ENCODE measurements at regions of chr12 and their contacts with region 1.

Region 1: DNA sequence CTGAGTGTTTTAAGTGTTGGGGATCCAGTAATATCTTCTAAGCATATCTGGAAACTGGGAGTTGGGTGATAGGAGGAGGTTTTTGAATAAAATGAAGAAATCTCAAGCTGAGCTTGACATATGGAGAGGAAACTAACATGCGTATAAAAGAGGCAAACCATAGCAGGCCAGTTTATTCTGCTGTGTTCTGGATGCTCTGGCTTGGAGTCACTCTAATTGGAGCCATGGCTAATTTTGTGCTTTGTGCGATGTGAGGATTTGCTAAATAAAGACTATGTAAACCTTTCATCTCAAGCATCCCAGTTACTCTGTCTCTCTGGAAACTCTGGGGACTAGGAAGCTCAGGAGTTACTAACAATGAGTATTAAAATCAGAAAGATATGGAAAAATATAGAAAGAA is 66.5 kb downstream of the ATF7IP start:
- DNase-seq: no peak
- ATAC-seq: no peak
- H3K4me3 ChIP-seq: no peak overlapping the region
- H3K4me3 Mint-ChIP-seq: peak overlapping the region in 2 of 3 donors; percentile 13 to 41
- H3K27ac ChIP-seq: no peak overlapping the region
- H3K27ac Mint-ChIP-seq: peak overlapping the region in 1 of 2 donors; percentile 28
- H3K4me1 ChIP-seq: peaks cover 0 to 16% of the 10 kb centered on the region in 2 experiments
- H3K4me1 Mint-ChIP-seq: peaks cover 64 to 80% (median 66%) of the 10 kb centered on the region in 3 donors
- H3K27me3 ChIP-seq: no peaks in the 10 kb centered on the region
- H3K27me3 Mint-ChIP-seq: no peaks in the 10 kb centered on the region

Region 2: DNA sequence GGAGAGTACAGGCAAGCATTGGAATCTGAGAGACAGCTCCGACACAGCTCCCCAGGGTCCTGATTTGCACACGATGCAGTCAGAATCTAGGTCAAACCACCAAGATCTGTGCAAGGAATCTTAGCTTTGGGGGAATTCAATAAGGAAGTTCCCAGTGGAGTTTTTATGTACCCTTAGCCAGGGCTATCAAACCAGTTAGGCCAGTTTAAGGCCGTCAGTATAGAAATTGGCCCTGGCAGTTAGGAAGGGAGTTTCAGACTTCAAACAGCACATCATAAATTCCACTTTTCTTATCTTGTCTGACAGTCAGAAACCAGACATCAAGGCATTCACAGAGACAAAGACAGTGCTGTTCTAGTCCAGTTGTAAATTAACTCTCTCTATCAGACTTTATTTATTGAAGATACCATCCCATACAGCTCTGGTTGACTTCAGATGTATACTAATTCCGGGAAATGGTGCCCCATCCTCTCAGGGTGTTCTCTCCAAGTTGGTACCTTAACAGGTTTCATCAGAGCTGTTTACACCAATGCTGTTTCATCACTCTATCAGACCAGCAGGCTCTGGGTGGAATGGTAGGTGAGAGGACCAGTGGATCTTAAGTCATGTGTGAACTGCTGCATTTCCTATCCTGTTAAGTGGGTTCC is 223.9 kb before region 1 on chr12:
- CTCF ChIA-PET with region 1: no interaction called
- POLR2A ChIA-PET with region 1: interaction called in 1 of 2 experiments, 16 read pairs
- DNase-seq: no peak
- ATAC-seq: no peak
- H3K4me3 ChIP-seq: no peak overlapping the region
- H3K4me3 Mint-ChIP-seq: no peak overlapping the region
- H3K27ac ChIP-seq: no peak overlapping the region
- H3K27ac Mint-ChIP-seq: no peak overlapping the region
- H3K4me1 ChIP-seq: no peaks in the 10 kb centered on the region
- H3K4me1 Mint-ChIP-seq: no peaks in the 10 kb centered on the region
- H3K27me3 ChIP-seq: no peaks in the 10 kb centered on the region
- H3K27me3 Mint-ChIP-seq: no peaks in the 10 kb centered on the region

Region 3: DNA sequence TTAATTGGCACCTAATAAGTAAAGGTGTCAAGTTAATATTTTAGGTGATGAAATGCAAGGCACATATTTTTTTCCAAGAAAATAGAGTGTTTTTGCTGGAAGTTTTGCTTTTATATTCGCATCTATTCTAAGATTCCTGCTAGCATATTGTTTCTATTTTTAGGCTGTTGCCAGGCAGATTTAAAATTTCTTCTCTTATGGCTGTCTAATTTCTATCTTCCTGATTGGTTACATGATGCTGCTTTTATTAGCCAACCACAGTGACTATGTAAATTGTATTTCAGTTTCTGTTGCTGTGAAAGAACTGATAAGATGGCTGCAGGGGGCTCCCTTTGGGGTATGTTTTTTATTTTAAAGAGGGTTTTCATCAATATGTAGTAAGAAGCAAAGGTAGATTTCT is 23.8 kb before region 1 on chr12:
- CTCF ChIA-PET with region 1: no interaction called
- POLR2A ChIA-PET with region 1: no interaction called
- DNase-seq: peak in 1 of 35 experiments; percentile 58
- ATAC-seq: peak in 1 of 4 experiments; percentile 50
- H3K4me3 ChIP-seq: no peak overlapping the region
- H3K4me3 Mint-ChIP-seq: peak overlapping the region; percentile 7 to 24 (median 10)
- H3K27ac ChIP-seq: peak overlapping the region; percentile 44
- H3K27ac Mint-ChIP-seq: peak overlapping the region; percentile 68 to 71
- H3K4me1 ChIP-seq: peaks cover 9 to 29% of the 10 kb centered on the region in 2 experiments
- H3K4me1 Mint-ChIP-seq: peaks cover 58 to 77% (median 76%) of the 10 kb centered on the region in 3 donors
- H3K27me3 ChIP-seq: no peaks in the 10 kb centered on the region
- H3K27me3 Mint-ChIP-seq: no peaks in the 10 kb centered on the region

Region 4: DNA sequence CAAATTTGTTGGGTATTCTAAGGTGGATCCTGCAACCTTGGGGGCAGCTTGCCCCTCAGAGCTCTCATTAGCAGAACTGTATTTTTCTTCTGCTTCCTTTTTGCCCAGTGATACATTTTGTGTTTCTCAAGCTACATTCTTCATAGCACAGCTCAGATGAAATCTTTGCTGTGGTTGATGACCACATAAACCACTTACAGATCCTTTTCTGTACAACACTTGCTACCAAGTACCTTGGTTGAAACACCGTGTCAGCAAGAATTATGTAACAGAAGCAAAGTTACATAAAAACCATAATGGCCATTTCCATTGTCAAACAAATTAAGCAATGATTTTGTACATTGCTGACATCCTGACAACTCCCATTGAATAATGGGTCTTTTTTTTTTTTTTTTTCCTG is 145.4 kb after region 1 on chr12:
- CTCF ChIA-PET with region 1: no interaction called
- POLR2A ChIA-PET with region 1: no interaction called
- DNase-seq: peak in 5 of 35 experiments; percentile 4 to 67 (median 7)
- ATAC-seq: peak; percentile 58 to 95 (median 78)
- H3K4me3 ChIP-seq: no peak overlapping the region
- H3K4me3 Mint-ChIP-seq: peak overlapping the region in 1 of 3 donors; percentile 26
- H3K27ac ChIP-seq: no peak overlapping the region
- H3K27ac Mint-ChIP-seq: no peak overlapping the region
- H3K4me1 ChIP-seq: peaks cover 0 to 15% of the 10 kb centered on the region in 2 experiments
- H3K4me1 Mint-ChIP-seq: peaks cover 22 to 27% (median 25%) of the 10 kb centered on the region in 3 donors
- H3K27me3 ChIP-seq: peaks cover 0 to 3% of the 10 kb centered on the region in 2 experiments
- H3K27me3 Mint-ChIP-seq: no peaks in the 10 kb centered on the region

Region 5: DNA sequence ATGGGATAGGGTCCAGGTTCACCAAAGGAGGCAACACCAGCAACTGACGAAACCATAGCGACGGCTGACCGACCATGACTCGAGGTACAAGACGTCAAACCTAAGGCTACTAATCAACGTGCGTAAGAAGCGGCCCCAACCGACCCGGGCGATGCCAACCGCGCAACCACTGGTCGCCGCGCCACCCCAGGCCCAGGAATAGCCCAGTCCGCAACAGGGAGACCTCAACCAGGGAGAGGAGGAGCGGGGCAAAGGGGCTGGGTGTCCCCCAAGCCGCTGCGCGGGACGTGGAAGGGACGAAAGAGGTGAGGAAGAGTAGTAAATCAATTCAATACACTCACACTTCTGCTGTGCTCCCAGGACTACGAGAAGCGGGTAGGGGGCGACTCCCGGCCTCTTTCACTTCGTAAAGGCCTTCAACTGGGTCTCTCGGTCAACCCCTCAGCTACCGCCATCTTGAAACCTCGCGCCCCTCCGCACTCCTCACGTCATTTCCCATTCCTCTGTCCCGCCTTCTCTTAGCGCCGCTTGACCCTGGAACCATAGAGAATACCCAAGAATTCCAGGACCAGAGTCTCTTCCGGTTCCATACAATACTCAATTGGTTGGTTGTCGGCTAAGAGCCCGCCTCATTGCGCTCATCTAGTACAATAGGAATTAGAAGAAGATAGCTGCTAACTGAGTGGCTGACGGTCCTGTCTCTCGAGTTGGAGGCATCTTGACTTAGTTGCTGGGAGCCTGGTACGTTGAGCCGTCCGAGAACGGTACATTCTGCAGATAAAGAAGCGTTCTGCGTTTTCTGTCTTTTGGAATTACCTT is 371.2 kb after region 1 on chr12 and contains the starts of genes C12orf60 and WBP11:
- CTCF ChIA-PET with region 1: no interaction called
- POLR2A ChIA-PET with region 1: no interaction called
- DNase-seq: peak; percentile 62 to 96 (median 87)
- ATAC-seq: peak; percentile 95 to 99 (median 96)
- H3K4me3 ChIP-seq: peak within 1 kb of the TSS; percentile 72 to 90
- H3K4me3 Mint-ChIP-seq: no peak within 1 kb of the TSS
- H3K27ac ChIP-seq: peak within 1 kb of the TSS; percentile 93
- H3K27ac Mint-ChIP-seq: no peak within 1 kb of the TSS
- H3K4me1 ChIP-seq: peaks cover 7 to 18% of the 10 kb centered on the region in 2 experiments
- H3K4me1 Mint-ChIP-seq: peaks cover 0 to 24% (median 17%) of the 10 kb centered on the region in 3 donors
- H3K27me3 ChIP-seq: no peaks in the 10 kb centered on the region
- H3K27me3 Mint-ChIP-seq: no peaks in the 10 kb centered on the region
- total RNA-seq, gene C12orf60: 0.50 to 1.4 (median 0.93) TPM in 4 of 5 donors, not detected in the other
- total RNA-seq, gene WBP11: 72.6 to 122 (median 80.6) TPM